A549 (cell line): ENCODE measurements at regions of chr9 and their contacts with region 1.

Region 1: DNA sequence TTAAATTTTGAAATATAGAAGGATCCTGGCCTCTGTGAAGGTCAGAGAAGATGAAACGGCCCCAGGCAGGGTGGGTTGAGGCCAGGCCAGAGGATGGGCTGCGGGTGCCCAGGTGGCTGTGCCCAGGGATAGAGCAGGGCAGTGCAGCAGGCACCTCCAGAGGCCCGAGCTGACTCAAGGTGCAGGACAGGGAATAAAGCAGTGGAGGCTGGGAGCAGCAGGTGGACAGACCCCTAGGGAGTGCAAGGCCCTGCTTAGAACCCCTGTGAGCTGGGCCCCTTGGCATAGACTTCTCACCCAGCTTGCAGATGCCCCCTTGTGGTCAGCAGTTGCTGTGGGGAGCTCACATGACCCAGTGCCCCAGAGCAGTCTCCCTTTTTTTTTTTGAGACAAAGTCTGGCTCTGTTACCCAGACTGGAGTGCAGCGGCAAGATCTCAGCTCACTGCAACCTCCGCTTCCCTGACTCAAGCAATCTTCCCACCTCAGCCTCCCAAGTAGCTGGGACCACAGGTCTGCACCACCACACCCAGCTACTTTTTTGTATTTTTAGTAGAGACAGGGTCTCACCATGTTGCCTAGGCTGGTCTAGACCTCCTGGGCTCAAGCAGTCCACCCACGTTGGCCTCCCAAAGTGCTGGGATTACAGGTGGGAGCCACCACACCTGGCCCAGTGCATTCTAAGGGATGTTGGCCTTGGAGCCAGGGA is 118.8 kb downstream of the WNK2 start:
- DNase-seq: peak; percentile 73 to 74
- ATAC-seq: peak; percentile 71 to 88
- H3K4me3 ChIP-seq: no peak overlapping the region
- H3K27ac ChIP-seq: 0 out of 6 replicates have a peak overlapping the region, but pooled peaks of 1 of the 2 experiments have one; percentile 46
- H3K4me1 ChIP-seq: peaks cover 4% of the 10 kb centered on the region; the same call in 1 of the 3 replicates
- CTCF ChIP-seq: peak; percentile 66
- EP300 ChIP-seq: no peak
- POLR2A ChIP-seq: no peak
- RAD21 ChIP-seq: peak; percentile 72 to 74

Region 2: DNA sequence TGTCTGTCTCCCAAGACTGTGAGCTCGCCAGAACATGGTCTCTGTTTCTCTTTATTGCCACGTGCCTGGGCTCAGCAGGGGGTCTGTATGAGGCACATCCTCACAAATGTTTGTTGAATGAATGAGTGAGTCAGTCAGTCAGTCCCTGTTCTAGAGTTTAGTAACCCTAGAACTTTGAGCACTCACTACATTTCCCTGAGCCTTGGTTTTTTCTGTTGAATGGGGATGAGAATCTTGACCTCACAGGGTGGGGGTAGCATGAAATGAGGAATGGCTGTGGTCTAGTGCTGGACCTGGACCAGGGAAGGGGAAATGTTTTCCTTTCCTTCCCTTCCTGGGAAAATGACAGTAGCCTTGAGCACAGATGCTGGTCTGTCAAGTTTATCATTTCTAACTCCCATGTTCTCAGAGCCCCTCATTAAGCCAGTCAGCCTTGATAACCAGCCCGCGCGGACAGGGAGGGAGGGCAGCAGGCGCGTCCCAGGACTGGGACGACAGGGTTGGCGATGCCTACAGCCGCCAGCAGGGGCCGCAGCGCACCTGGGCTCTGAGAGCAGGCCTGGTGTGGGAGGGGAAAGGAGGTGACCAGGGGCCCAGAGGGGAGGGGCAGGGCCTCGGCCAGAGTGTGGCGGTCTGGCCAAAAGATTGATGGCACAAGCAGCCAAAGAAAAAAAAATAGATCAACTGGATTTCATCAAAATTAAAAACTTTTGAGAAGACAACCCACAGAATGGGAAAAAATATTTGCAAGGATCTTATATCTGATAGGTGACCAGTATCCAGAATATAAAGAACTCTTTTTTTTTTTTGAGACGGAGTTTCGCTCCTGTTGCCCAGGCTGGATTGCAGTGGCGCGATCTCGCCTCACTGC is 142.9 kb before region 1 on chr9:
- CTCF ChIA-PET with region 1: interaction called, 158 read pairs
- POLR2A ChIA-PET with region 1: no interaction called
- DNase-seq: peak; percentile 81 to 84
- ATAC-seq: peak; percentile 97 to 100
- H3K4me3 ChIP-seq: no peak overlapping the region
- H3K27ac ChIP-seq: peak overlapping the region in 1 of 2 experiments; percentile 66; a peak in 3 of 6 replicates
- H3K4me1 ChIP-seq: peaks cover 5% of the 10 kb centered on the region; the same call in 2 of the 3 replicates
- CTCF ChIP-seq: peak; percentile 95
- EP300 ChIP-seq: no peak
- POLR2A ChIP-seq: no peak
- RAD21 ChIP-seq: peak; percentile 98

Region 3: GRCh38 chr9:93166699-93167098 is 136.0 kb before region 1 on chr9:
- CTCF ChIA-PET with region 1: interaction called, 158 read pairs
- POLR2A ChIA-PET with region 1: no interaction called
- DNase-seq: no peak
- ATAC-seq: no peak
- H3K4me3 ChIP-seq: no peak overlapping the region
- H3K27ac ChIP-seq: no peak overlapping the region
- H3K4me1 ChIP-seq: no peaks in the 10 kb centered on the region
- CTCF ChIP-seq: no peak
- EP300 ChIP-seq: no peak
- POLR2A ChIP-seq: no peak
- RAD21 ChIP-seq: no peak

Region 4: DNA sequence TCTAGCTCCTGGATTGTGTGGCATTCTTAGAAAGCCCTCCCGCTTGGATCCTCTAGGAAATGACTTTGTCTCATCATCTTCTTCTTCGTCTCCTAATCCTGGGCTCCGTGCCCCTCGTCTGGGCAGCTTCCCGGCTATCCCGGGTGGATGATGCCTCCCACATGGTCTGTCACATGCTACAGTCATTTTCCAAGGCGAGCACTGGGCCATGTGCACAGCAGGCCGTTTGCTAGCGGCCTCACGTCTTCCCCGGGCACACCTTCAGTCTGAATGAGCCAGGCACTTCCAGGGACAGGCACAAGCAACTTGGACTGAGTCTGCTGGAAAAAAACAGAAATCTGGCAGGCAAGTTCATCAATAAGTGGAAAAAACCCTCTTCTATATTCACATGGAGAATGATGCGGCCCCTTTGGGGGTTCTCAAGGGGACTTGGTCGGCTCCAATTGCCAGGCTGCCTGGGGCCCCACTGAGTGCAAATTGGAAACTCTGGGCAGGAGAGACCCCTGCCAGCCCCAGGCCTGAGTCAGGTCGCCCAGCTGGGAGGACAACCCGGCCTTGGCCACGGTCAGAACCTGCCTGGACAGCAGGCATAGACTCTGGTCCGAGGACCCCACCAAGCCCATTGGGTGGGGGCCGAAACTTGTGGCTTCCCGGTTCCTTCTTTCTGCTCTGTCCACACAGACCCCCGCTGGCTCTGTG is 129.9 kb before region 1 on chr9:
- CTCF ChIA-PET with region 1: interaction called, 27 read pairs
- POLR2A ChIA-PET with region 1: no interaction called
- DNase-seq: no peak
- ATAC-seq: no peak
- H3K4me3 ChIP-seq: no peak overlapping the region
- H3K27ac ChIP-seq: no peak overlapping the region
- H3K4me1 ChIP-seq: no peaks in the 10 kb centered on the region
- CTCF ChIP-seq: no peak
- EP300 ChIP-seq: no peak
- POLR2A ChIP-seq: no peak
- RAD21 ChIP-seq: no peak

Region 5: GRCh38 chr9:93196096-93197055 is 106.3 kb before region 1 on chr9:
- CTCF ChIA-PET with region 1: interaction called, 10 read pairs
- POLR2A ChIA-PET with region 1: no interaction called
- DNase-seq: no peak
- ATAC-seq: no peak
- H3K4me3 ChIP-seq: no peak overlapping the region
- H3K27ac ChIP-seq: no peak overlapping the region
- H3K4me1 ChIP-seq: peaks cover 14% of the 10 kb centered on the region
- CTCF ChIP-seq: no peak
- EP300 ChIP-seq: no peak
- POLR2A ChIP-seq: no peak
- RAD21 ChIP-seq: no peak

Region 6: GRCh38 chr9:93288891-93289883 is 13.5 kb before region 1 on chr9:
- CTCF ChIA-PET with region 1: interaction called, 18 read pairs
- POLR2A ChIA-PET with region 1: no interaction called
- DNase-seq: peak; percentile 50 to 52
- ATAC-seq: peak; percentile 82
- H3K4me3 ChIP-seq: no peak overlapping the region
- H3K27ac ChIP-seq: peak overlapping the region; percentile 64 to 85; a peak in 5 of 6 replicates
- H3K4me1 ChIP-seq: peaks cover 14% of the 10 kb centered on the region
- CTCF ChIP-seq: no peak
- EP300 ChIP-seq: no peak
- POLR2A ChIP-seq: no peak
- RAD21 ChIP-seq: no peak

Region 7: DNA sequence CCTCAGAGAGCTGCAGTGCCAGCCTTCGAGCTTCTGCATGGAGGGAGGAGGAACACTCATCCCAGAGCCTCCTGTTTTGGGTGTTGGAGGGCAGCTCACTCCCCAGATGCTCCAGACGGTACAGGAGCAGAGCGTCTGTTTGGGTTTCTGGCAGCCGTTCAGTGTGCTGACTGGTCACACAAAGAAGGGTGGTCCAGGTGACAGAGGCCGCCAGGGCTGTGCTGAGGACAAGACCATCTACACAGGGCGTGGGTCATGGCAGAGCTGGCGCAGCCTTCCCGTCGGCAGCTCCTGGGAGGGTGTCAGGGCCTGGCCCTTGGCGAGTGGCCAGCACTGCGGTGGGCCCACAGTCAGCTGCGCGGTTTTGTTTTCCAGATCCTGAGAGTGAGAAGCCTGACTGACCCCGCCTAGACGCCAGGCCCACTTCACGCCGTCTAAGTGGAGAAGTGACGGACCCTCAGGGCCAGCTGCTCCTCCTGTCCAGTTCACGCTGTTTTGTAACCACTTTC is 17.3 kb after region 1 on chr9:
- CTCF ChIA-PET with region 1: interaction called, 52 read pairs
- POLR2A ChIA-PET with region 1: no interaction called
- DNase-seq: no peak
- ATAC-seq: no peak
- H3K4me3 ChIP-seq: no peak overlapping the region
- H3K27ac ChIP-seq: no peak overlapping the region
- H3K4me1 ChIP-seq: no peaks in the 10 kb centered on the region
- CTCF ChIP-seq: no peak
- EP300 ChIP-seq: no peak
- POLR2A ChIP-seq: no peak
- RAD21 ChIP-seq: no peak

Region 8: GRCh38 chr9:93346231-93347112 is 43.8 kb after region 1 on chr9:
- CTCF ChIA-PET with region 1: no interaction called
- POLR2A ChIA-PET with region 1: no interaction called
- DNase-seq: no peak
- ATAC-seq: no peak
- H3K4me3 ChIP-seq: no peak overlapping the region
- H3K27ac ChIP-seq: no peak overlapping the region
- H3K4me1 ChIP-seq: no peaks in the 10 kb centered on the region
- CTCF ChIP-seq: no peak
- EP300 ChIP-seq: no peak
- POLR2A ChIP-seq: no peak
- RAD21 ChIP-seq: no peak